Ascending aorta (tissue), 2 donors: ENCODE measurements at regions of chr17 and their contacts with region 1.

Region 1: GRCh38 chr17:716238-716637 is 1.6 kb upstream of the VPS53 start:
- DNase-seq: no peak
- H3K4me3 ChIP-seq: no peak overlapping the region
- H3K27ac ChIP-seq: no peak overlapping the region
- H3K4me1 ChIP-seq: peaks cover 5 to 12% of the 10 kb centered on the region in 2 donors
- H3K27me3 ChIP-seq: no peaks in the 10 kb centered on the region
- CTCF ChIP-seq: no peak

Region 2: DNA sequence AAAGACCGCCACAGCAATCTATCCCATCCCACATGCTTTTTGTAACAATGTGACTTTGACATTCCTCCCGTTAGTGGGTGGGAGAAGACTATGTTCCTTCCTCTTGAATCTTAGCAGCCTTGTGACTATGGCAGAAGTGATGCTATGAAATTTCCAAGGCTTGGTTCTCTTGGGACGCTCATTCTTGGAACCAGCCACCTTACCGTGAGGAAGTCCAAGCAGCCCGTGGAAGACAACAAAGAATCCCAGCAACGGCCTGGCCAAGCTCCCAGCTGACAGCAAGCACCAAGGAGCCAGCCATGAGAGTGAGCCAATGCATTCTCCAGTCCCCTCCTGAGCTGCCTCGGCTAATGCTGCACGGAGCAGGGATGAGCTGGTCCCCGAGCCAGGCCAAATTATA is 63.9 kb before region 1 on chr17:
- intact Hi-C with region 1: no loop called
- DNase-seq: peak in 1 of 2 donors; percentile 81
- H3K4me3 ChIP-seq: no peak overlapping the region
- H3K27ac ChIP-seq: no peak overlapping the region
- H3K4me1 ChIP-seq: no peaks in the 10 kb centered on the region
- H3K27me3 ChIP-seq: no peaks in the 10 kb centered on the region
- CTCF ChIP-seq: no peak

Region 3: GRCh38 chr17:752002-752619 is 35.9 kb after region 1 on chr17 and contains the start of gene GEMIN4:
- intact Hi-C with region 1: loop called (anchors 1 kb)
- DNase-seq: peak; percentile 33 to 96
- H3K4me3 ChIP-seq: peak within 1 kb of the TSS; percentile 70 to 95
- H3K27ac ChIP-seq: peak within 1 kb of the TSS; percentile 81 to 88
- H3K4me1 ChIP-seq: peaks cover 6 to 14% of the 10 kb centered on the region in 2 donors
- H3K27me3 ChIP-seq: no peaks in the 10 kb centered on the region
- CTCF ChIP-seq: peak; percentile 94 to 97 (median 95)
- total RNA-seq, gene GEMIN4: 11.2 TPM

Region 4: DNA sequence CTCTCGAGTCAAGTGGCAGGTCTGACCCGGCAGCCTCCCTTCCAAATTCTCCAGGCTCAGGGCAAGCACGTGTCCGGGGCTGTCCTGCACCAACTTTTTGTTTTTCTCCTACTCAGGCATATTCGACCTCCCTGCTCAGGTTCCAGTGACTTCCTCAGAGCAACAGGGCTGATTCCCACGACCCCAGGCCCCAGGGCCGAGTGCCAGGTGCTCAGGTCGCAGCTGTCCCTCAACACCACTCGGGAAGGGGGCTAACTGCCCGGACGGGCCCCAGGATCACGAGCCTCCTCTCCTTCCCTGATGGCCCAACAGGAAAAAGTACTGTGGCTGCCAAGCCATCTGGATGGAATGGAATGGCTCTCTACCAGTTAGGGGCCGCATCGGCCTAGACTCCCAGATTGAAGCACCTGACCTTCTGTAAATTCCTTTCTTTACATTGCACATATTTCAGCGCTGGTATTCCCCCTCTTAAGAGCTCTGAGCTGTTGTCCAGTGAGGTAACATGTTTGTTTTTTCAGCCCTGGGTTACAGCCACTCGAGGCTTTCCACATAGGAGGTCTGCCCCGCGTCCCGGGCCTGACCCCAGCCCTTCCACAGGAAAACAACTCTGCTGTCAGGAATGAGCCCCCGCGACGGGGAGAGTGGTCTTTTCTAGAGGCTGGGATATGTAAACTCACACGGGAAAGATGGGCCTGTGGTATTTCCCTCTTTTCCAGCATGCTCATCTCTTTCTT is 238.4 kb after region 1 on chr17:
- intact Hi-C with region 1: no loop called
- DNase-seq: no peak
- H3K4me3 ChIP-seq: no peak overlapping the region
- H3K27ac ChIP-seq: peak overlapping the region in 1 of 2 donors; percentile 54
- H3K4me1 ChIP-seq: peaks cover 3 to 16% of the 10 kb centered on the region in 2 donors
- H3K27me3 ChIP-seq: no peaks in the 10 kb centered on the region
- CTCF ChIP-seq: no peak